AG04450 (cell line): ENCODE measurements at regions of chr10 and their contacts with region 1.

Region 1: GRCh38 chr10:4131407-4132228 is 346.6 kb upstream of the KLF6 start:
- DNase-seq: peak; percentile 65
- H3K4me3 ChIP-seq: no peak overlapping the region
- H3K27ac ChIP-seq: peak overlapping the region; percentile 68
- H3K27me3 ChIP-seq: no peaks in the 10 kb centered on the region
- CTCF ChIP-seq: no peak

Region 2: GRCh38 chr10:3251172-3251571 is 880.4 kb before region 1 on chr10:
- CTCF ChIA-PET with region 1: no interaction called
- POLR2A ChIA-PET with region 1: interaction called, 10 read pairs
- DNase-seq: no peak
- H3K4me3 ChIP-seq: no peak overlapping the region
- H3K27ac ChIP-seq: no peak overlapping the region
- H3K27me3 ChIP-seq: no peaks in the 10 kb centered on the region
- CTCF ChIP-seq: no peak